PC-3 (cell line): ENCODE measurements at regions of chr19 and their contacts with region 1.

Region 1: DNA sequence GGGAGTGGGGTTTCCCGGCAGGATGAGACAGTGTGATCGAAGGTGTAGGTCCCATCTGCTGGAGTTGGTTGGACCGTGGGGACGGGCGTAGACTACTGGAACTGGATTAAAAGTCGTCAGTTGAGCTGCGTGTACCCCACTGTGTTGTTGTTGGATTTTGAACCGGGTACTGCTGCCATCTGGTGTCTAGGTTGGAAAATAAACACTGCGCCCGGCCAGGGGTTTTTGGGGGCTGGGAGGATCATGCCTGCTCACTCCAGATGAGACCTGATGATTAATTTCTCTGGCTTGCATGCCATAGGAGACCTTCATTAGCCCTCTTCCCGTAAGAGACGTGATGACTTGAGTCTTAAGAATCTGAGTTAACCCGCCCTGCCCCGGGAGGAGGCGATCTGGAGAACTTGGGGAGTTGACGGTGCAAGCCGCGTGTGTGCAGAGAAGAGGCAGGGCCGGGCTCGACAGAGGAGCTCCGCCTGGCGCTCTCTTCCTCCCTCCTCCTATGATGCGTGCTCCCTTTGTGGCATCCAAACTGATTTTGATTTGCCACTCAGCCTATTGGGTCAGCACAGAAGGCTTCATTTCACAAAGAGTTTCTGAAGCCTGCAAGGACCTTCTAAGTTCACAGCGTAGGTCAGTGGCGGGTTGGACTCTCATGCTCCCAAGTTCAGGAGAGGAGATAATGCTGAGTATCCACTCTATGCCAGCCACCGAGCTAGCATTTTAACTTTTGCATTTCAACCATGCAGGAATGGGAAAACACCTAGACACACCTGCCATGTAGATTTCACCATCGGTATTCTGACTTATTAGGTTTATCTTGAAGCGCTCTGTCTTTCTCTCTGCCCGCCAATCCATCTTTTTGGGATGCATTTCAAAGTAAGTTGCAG is 2.7 kb downstream of the UHRF1 start:
- DNase-seq: peak; percentile 99
- ATAC-seq: peak; percentile 59
- H3K4me3 ChIP-seq: peak overlapping the region; percentile 78
- H3K27ac ChIP-seq: peak overlapping the region; percentile 81
- H3K4me1 ChIP-seq: peaks cover 59% of the 10 kb centered on the region
- H3K27me3 ChIP-seq: no peaks in the 10 kb centered on the region
- CTCF ChIP-seq: peak; percentile 88

Region 2: DNA sequence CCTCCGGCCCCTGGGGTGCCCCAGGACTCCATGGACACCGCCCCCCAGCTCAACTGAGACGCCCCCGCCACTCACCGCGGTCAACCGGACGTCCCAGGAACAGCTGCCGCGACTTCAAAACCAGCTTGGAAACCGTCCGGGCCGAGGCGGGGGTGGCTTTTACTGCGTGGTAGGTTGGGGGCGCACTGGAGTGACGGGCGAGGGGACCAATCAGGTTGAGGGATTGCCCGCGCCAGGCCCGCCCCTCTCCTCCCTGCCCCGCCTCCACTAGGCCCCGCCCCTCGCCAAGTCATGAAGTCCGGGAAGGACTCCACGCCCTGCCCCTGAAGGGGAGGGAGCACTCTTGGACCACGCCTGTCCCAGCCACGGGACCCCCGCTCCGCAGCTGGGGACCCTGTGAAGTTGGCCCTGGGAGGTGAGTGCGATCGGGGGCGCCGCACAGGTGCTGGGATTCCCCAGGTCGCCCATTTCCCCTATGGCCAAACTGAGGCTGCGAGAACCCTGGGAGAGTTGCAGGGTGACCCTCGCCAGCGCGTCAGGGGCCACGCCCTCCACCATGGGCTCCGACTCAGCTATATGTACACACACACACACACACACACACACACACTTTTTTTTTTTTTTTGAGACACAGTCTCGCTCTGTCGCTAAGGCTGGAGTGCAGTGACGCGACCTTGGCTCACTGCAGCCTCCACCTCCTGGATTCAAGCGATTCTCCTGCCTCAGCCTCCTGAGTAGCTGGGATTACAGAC is 44.3 kb before region 1 on chr19 and contains the start of gene PLIN3:
- CTCF ChIA-PET with region 1: interaction called, 40 read pairs
- POLR2A ChIA-PET with region 1: interaction called, 6 read pairs
- intact Hi-C with region 1: loop called (anchors 1 kb)
- DNase-seq: peak; percentile 95
- ATAC-seq: peak; percentile 74
- H3K4me3 ChIP-seq: peak within 1 kb of the TSS; percentile 80
- H3K27ac ChIP-seq: peak within 1 kb of the TSS; percentile 84
- H3K4me1 ChIP-seq: peaks cover 22% of the 10 kb centered on the region
- H3K27me3 ChIP-seq: no peaks in the 10 kb centered on the region
- CTCF ChIP-seq: no peak
- total RNA-seq, gene PLIN3: 136 and 159 TPM in 2 replicates

Region 3: GRCh38 chr19:4896372-4896771 is 15.7 kb before region 1 on chr19:
- CTCF ChIA-PET with region 1: no interaction called
- POLR2A ChIA-PET with region 1: no interaction called
- intact Hi-C with region 1: no loop called
- DNase-seq: peak; percentile 66
- ATAC-seq: peak; percentile 35; the same call in 1 of the 2 replicates
- H3K4me3 ChIP-seq: no peak overlapping the region
- H3K27ac ChIP-seq: no peak overlapping the region
- H3K4me1 ChIP-seq: peaks cover 4% of the 10 kb centered on the region; the same call in 1 of the 2 replicates
- H3K27me3 ChIP-seq: no peaks in the 10 kb centered on the region
- CTCF ChIP-seq: no peak

Region 4: DNA sequence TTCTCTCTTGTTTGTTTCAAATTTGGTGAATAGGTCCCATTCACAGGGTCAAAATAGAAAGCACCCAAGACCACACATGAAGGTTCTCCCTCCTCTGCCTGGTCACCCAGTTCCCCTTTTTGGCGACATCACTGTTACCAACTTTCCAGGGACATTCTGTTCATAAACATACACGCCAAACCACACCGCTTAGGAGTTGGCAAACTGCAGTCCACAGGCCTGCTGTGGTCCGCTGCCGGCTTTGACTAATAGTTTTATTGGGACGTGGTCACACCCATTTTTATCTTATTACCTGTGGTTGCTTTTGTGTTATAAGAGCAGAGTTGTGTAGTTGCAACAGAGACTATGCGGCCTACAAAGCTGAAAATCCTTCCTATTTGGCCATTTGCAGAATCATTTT is 21.5 kb after region 1 on chr19:
- CTCF ChIA-PET with region 1: no interaction called
- POLR2A ChIA-PET with region 1: no interaction called
- intact Hi-C with region 1: no loop called
- DNase-seq: peak; percentile 93
- ATAC-seq: peak; percentile 95
- H3K4me3 ChIP-seq: no peak overlapping the region
- H3K27ac ChIP-seq: 0 out of 2 replicates have a peak overlapping the region, but pooled peaks have one; percentile 19
- H3K4me1 ChIP-seq: peaks cover 17% of the 10 kb centered on the region
- H3K27me3 ChIP-seq: no peaks in the 10 kb centered on the region
- CTCF ChIP-seq: no peak

Region 5: GRCh38 chr19:4969772-4970531 is 57.9 kb after region 1 on chr19:
- CTCF ChIA-PET with region 1: interaction called, 4 read pairs
- POLR2A ChIA-PET with region 1: interaction called, 3 read pairs
- intact Hi-C with region 1: loop called (anchors 2 kb)
- DNase-seq: peak; percentile 51
- ATAC-seq: no peak
- H3K4me3 ChIP-seq: peak overlapping the region; percentile 84
- H3K27ac ChIP-seq: no peak overlapping the region
- H3K4me1 ChIP-seq: peaks cover 33% of the 10 kb centered on the region
- H3K27me3 ChIP-seq: no peaks in the 10 kb centered on the region
- CTCF ChIP-seq: no peak